GM12878 (cell line): ENCODE measurements at regions of chr11 and their contacts with region 1.

Region 1: GRCh38 chr11:88103337-88104206 is 71.7 kb downstream of the RAB38 start:
- DNase-seq: peak; percentile 53
- ATAC-seq: peak; percentile 96
- H3K4me3 ChIP-seq: no peak overlapping the region
- H3K27ac ChIP-seq: no peak overlapping the region
- H3K4me1 ChIP-seq: peaks cover 3% of the 10 kb centered on the region
- H3K27me3 ChIP-seq: no peaks in the 10 kb centered on the region; a peak in 1 of 4 replicates
- CTCF ChIP-seq: peak; percentile 77 to 90 (median 85)
- EP300 ChIP-seq: no peak
- POLR2A ChIP-seq: no peak
- RAD21 ChIP-seq: peak; percentile 83

Region 2: DNA sequence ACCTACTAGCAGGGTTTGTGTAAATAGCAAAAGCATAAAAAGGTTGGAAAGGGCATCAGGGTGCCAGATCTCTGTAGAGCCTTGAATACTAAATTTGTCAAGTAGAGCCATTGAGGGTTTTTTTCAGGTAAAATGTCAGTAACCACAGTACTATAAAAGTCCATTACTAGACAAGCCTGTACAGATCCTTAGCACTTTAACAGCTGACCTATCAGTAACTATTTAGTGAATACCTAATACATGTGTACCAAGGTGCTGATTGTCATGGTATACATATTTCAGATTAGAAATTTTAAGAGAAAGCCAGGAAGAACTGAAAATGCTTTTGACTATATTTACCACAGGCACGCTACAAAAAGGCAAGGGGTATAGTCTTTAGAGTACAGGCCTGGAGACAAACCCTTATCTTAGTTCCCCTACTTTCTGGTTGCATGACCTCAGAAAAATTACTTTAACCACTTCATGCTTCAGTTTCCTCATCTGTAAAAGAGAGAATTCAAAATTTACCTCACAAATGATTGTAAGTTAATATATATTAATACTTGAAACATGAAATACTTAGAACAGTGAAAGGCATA is 13.8 kb after region 1 on chr11:
- CTCF ChIA-PET with region 1: interaction called, 11 read pairs
- POLR2A ChIA-PET with region 1: interaction called, 4 read pairs
- RAD21 ChIA-PET with region 1: interaction called, 3 read pairs
- SMC1A ChIA-PET with region 1: interaction called, 25 read pairs
- in situ Hi-C with region 1: no loop called
- intact Hi-C with region 1: no loop called
- DNase-seq: no peak
- ATAC-seq: peak; percentile 87
- H3K4me3 ChIP-seq: no peak overlapping the region
- H3K27ac ChIP-seq: no peak overlapping the region
- H3K4me1 ChIP-seq: peaks cover 5% of the 10 kb centered on the region; the same call in 1 of the 2 replicates
- H3K27me3 ChIP-seq: no peaks in the 10 kb centered on the region; a peak in 1 of 4 replicates
- CTCF ChIP-seq: no peak
- EP300 ChIP-seq: no peak
- POLR2A ChIP-seq: no peak
- RAD21 ChIP-seq: no peak

Region 3: DNA sequence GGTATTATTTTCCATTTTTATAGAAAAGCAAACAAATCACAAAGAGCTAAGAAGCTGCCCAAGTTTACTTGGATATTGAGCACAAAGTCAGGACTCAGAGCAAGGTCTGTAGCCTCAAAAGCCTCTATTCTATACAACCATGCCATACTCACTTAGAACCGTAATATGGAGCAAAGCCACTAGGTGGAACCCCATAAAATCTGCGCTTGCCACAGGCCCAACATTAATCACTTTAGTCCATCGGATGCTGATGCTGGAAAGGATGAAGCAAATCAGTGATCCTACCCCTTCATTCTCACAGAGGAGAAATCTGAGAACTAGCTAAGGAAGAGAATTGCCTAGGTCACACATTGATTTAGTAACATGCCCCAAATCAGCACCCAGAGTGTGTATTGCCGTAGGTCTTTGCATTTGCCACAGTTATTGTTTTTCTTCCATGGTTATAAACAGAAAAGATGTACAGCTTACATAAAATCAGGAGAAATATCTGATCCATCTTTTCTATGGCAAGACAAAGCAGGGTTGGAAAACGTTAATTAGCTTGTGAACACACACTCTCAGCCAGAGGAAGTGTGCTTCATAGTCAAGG is 128.4 kb after region 1 on chr11:
- CTCF ChIA-PET with region 1: interaction called, 4 read pairs
- POLR2A ChIA-PET with region 1: no interaction called
- RAD21 ChIA-PET with region 1: interaction called, 5 read pairs
- SMC1A ChIA-PET with region 1: interaction called, 3 read pairs
- in situ Hi-C with region 1: no loop called
- intact Hi-C with region 1: loop called (anchors 5 kb)
- DNase-seq: no peak
- ATAC-seq: peak; percentile 97
- H3K4me3 ChIP-seq: no peak overlapping the region
- H3K27ac ChIP-seq: no peak overlapping the region
- H3K4me1 ChIP-seq: no peaks in the 10 kb centered on the region
- H3K27me3 ChIP-seq: no peaks in the 10 kb centered on the region
- CTCF ChIP-seq: peak; percentile 45 to 68 (median 62)
- EP300 ChIP-seq: no peak
- POLR2A ChIP-seq: no peak
- RAD21 ChIP-seq: peak; percentile 76

Region 4: GRCh38 chr11:88337181-88337986 is 233.8 kb after region 1 on chr11 and contains the start of gene CTSC:
- CTCF ChIA-PET with region 1: interaction called, 3 read pairs
- POLR2A ChIA-PET with region 1: no interaction called
- RAD21 ChIA-PET with region 1: interaction called, 3 read pairs
- SMC1A ChIA-PET with region 1: interaction called, 5 read pairs
- in situ Hi-C with region 1: no loop called
- intact Hi-C with region 1: loop called (anchors 5 kb)
- DNase-seq: no peak
- ATAC-seq: peak; percentile 82
- H3K4me3 ChIP-seq: peak within 1 kb of the TSS; percentile 99
- H3K27ac ChIP-seq: peak within 1 kb of the TSS; percentile 84
- H3K4me1 ChIP-seq: no peaks in the 10 kb centered on the region; the same call in 1 of the 2 replicates
- H3K27me3 ChIP-seq: no peaks in the 10 kb centered on the region
- CTCF ChIP-seq: no peak
- EP300 ChIP-seq: peak in 1 of 2 experiments; percentile 48; a peak in 1 of 4 replicates
- POLR2A ChIP-seq: peak; percentile 100
- RAD21 ChIP-seq: peak; percentile 20; the same call in 1 of the 2 replicates
- polyA plus RNA-seq, gene CTSC: 709 to 1,123 TPM

Region 5: DNA sequence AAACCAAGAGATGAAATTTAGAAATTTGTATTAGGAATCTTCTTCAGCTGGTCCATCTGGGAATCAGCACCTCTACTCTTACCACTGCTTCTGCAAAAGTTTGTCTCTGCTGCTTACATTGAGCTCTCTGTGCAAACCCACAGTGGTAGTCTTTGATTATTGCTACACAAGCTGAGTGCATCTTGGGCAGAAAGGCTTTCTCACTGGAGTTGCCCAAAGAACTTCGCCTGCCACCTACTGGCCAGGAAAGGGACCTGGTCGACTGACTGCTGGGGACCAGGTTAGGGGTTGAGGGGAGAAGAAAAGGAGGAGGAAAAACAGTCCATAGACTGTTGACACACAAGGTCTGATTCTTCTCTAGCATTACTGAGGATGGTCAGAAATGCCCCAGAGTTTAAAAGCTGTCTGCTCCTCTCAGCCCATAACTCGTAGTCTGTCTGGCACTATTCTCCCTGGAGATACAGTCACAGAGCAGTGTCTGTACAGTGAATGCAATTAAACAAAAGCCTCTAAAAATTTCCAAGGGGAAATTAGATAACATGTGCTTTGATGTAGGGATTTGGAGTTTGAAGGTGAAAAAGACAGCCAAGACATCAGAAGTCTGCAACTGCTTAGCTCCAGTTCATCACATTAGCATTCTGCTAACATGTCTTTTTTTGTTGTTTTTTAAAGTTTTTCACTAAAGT is 448.9 kb after region 1 on chr11:
- CTCF ChIA-PET with region 1: interaction called, 10 read pairs
- POLR2A ChIA-PET with region 1: no interaction called
- RAD21 ChIA-PET with region 1: interaction called, 7 read pairs
- SMC1A ChIA-PET with region 1: interaction called, 3 read pairs
- in situ Hi-C with region 1: no loop called
- intact Hi-C with region 1: no loop called
- DNase-seq: peak; percentile 12
- ATAC-seq: peak; percentile 100
- H3K4me3 ChIP-seq: no peak overlapping the region
- H3K27ac ChIP-seq: no peak overlapping the region
- H3K4me1 ChIP-seq: no peaks in the 10 kb centered on the region
- H3K27me3 ChIP-seq: peaks cover 0 to 10% of the 10 kb centered on the region in 2 experiments; a peak in 2 of 4 replicates
- CTCF ChIP-seq: peak; percentile 84 to 93 (median 91)
- EP300 ChIP-seq: no peak
- POLR2A ChIP-seq: no peak
- RAD21 ChIP-seq: peak; percentile 86